ENCODE measurements at regions of chr17 and their contacts with region 1.

Region 1: DNA sequence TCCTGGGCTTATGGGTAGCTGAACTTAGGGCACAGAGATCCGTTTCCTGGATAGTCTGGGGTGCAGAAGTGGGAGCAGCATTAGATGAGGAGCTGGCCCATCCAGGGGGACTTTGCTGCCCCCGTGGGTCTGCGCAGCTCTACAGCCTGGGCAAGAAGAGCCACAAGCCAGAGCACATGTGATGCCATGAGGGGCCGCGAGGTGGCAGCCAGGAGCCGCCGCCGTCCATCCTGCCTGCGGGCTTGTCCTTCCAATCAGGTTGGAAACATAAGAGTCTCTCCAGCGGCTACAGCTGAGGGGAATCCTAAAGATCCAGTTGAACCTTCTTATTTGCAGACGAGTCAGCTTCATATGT is 21.9 kb downstream of the C1QTNF1 start:
- DNase-seq: no peak
- H3K4me3 ChIP-seq: no peak overlapping the region
- H3K27me3 ChIP-seq: no peaks in the 10 kb centered on the region; the same call in 1 of the 2 replicates
- CTCF ChIP-seq: peak; percentile 98

Region 2: GRCh38 chr17:79019632-79020584 is 25.9 kb before region 1 on chr17:
- CTCF ChIA-PET with region 1: interaction called, 61 read pairs
- POLR2A ChIA-PET with region 1: no interaction called
- DNase-seq: no peak
- H3K4me3 ChIP-seq: no peak overlapping the region
- H3K27me3 ChIP-seq: no peaks in the 10 kb centered on the region
- CTCF ChIP-seq: peak; percentile 77

Region 3: DNA sequence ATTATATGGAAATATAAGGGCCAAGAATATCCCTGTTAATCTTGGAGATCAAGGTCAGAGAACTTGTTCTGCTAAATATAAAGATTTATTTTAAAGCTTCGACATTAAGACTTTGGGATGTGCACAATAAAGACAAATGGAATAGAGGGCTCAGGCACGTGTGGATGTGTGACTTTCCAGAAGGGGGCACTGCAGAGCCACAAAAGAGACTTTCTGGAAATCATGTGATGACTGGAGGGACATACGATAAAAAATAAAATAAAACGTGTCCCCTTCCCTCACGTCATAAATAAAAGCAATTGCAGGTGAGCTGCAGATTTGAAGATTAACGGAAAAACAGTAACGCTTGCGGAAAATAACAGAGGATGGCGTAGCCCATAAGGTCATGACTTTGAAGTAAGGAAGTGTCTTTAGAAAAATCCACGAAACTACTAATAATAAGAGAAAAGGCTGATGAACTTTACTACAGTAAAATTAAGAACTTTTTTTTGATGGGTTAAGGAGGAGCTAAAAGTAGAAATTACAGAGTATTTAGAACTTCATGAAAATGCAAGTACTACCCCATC is 19.4 kb after region 1 on chr17:
- CTCF ChIA-PET with region 1: interaction called, 15 read pairs
- POLR2A ChIA-PET with region 1: no interaction called
- DNase-seq: no peak
- H3K4me3 ChIP-seq: no peak overlapping the region
- H3K27me3 ChIP-seq: peaks cover 3% of the 10 kb centered on the region
- CTCF ChIP-seq: peak; percentile 51

Region 4: GRCh38 chr17:79082311-79083190 is 36.7 kb after region 1 on chr17:
- CTCF ChIA-PET with region 1: interaction called, 46 read pairs
- POLR2A ChIA-PET with region 1: no interaction called
- DNase-seq: no peak
- H3K4me3 ChIP-seq: no peak overlapping the region
- H3K27me3 ChIP-seq: no peaks in the 10 kb centered on the region
- CTCF ChIP-seq: peak; percentile 90

Region 5: DNA sequence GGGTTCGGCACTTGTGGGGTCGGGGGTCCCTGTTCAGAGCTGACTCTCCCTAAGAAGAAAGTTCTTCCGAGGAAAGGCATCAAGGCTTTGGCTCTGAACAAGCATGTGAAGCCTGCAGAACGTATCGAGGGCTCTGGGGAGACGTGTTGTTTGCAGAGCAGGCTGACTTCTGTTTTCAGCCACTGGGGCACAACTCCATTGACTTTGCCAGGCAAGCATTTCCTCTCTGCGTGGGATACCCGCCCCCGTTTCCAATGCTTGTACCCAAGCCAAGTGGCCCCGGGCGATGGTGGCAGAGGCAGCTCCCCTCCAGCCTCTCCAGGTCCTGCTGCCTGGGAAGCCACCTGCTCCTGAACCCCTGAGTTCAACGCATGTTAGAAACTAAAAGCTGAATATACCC is 309.3 kb after region 1 on chr17:
- CTCF ChIA-PET with region 1: no interaction called
- POLR2A ChIA-PET with region 1: no interaction called
- DNase-seq: no peak
- H3K4me3 ChIP-seq: no peak overlapping the region
- H3K27me3 ChIP-seq: peaks cover 5% of the 10 kb centered on the region
- CTCF ChIP-seq: no peak

Region 6: GRCh38 chr17:79400989-79401703 is 355.3 kb after region 1 on chr17:
- CTCF ChIA-PET with region 1: interaction called, 10 read pairs
- POLR2A ChIA-PET with region 1: no interaction called
- DNase-seq: no peak
- H3K4me3 ChIP-seq: peak overlapping the region; percentile 15
- H3K27me3 ChIP-seq: peaks cover 19% of the 10 kb centered on the region
- CTCF ChIP-seq: peak; percentile 98